ENCODE measurements at regions of chr2 and their contacts with region 1.

Region 1: GRCh38 chr2:7427293-7428060 is 510.3 kb downstream of the RNF144A start:
- DNase-seq: no peak
- H3K4me3 Mint-ChIP-seq: no peak overlapping the region
- H3K27ac Mint-ChIP-seq: no peak overlapping the region
- H3K4me1 Mint-ChIP-seq: peaks cover 31% of the 10 kb centered on the region
- H3K27me3 Mint-ChIP-seq: peaks cover 3% of the 10 kb centered on the region

Region 2: GRCh38 chr2:7097348-7097895 is 330.1 kb before region 1 on chr2:
- CTCF ChIA-PET with region 1: interaction called, 3 read pairs
- intact Hi-C with region 1: loop called (anchors 5 kb)
- DNase-seq: peak; percentile 84
- H3K4me3 Mint-ChIP-seq: peak overlapping the region; percentile 58
- H3K27ac Mint-ChIP-seq: no peak overlapping the region
- H3K4me1 Mint-ChIP-seq: peaks cover 7% of the 10 kb centered on the region
- H3K27me3 Mint-ChIP-seq: no peaks in the 10 kb centered on the region

Region 3: GRCh38 chr2:7725171-7725849 is 297.8 kb after region 1 on chr2:
- CTCF ChIA-PET with region 1: interaction called, 6 read pairs
- intact Hi-C with region 1: loop called (anchors 1 kb)
- DNase-seq: peak; percentile 19
- H3K4me3 Mint-ChIP-seq: peak overlapping the region; percentile 30
- H3K27ac Mint-ChIP-seq: peak overlapping the region; percentile 25
- H3K4me1 Mint-ChIP-seq: peaks cover 15% of the 10 kb centered on the region
- H3K27me3 Mint-ChIP-seq: no peaks in the 10 kb centered on the region

Region 4: GRCh38 chr2:7744827-7745226 is 317.4 kb after region 1 on chr2:
- CTCF ChIA-PET with region 1: interaction called, 18 read pairs
- intact Hi-C with region 1: loop called (anchors 2 kb)
- DNase-seq: peak; percentile 29
- H3K4me3 Mint-ChIP-seq: no peak overlapping the region
- H3K27ac Mint-ChIP-seq: no peak overlapping the region
- H3K4me1 Mint-ChIP-seq: peaks cover 11% of the 10 kb centered on the region
- H3K27me3 Mint-ChIP-seq: peaks cover 1% of the 10 kb centered on the region

Region 5: DNA sequence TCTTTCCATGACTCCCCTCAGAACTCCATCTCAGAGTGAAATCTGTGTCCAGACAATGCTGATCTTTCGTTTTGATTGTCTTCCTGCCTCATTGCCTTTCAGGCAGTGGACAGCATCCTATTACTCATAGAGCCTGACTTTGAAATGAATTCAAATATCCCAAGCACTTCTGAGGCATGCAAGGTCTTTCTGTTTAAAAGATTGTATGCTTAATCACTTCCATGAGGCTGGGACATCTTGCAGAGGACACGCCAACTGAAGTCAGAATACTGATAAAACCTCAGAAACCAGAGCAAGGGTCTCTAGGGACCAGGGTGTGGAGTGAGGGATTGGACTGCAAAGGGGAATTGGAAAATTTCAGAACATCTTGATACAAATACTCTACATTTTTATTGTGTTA is 417.9 kb after region 1 on chr2:
- CTCF ChIA-PET with region 1: no interaction called
- intact Hi-C with region 1: loop called (anchors 2 kb)
- DNase-seq: no peak
- H3K4me3 Mint-ChIP-seq: no peak overlapping the region
- H3K27ac Mint-ChIP-seq: no peak overlapping the region
- H3K4me1 Mint-ChIP-seq: peaks cover 19% of the 10 kb centered on the region
- H3K27me3 Mint-ChIP-seq: peaks cover 5% of the 10 kb centered on the region

Measured in activated naive CD4-positive, alpha-beta T cell treated with anti-CD3 and anti-CD28 coated beads for 36 hours (primary cell).